ENCODE measurements at regions of chr4 and their contacts with region 1.

Region 1: GRCh38 chr4:113524096-113524495 is 237.4 kb downstream of the CAMK2D start:
- DNase-seq: no peak
- H3K4me3 Mint-ChIP-seq: no peak overlapping the region
- H3K27ac Mint-ChIP-seq: peak overlapping the region; percentile 43
- H3K4me1 Mint-ChIP-seq: peaks cover 22% of the 10 kb centered on the region
- H3K27me3 Mint-ChIP-seq: no peaks in the 10 kb centered on the region

Region 2: DNA sequence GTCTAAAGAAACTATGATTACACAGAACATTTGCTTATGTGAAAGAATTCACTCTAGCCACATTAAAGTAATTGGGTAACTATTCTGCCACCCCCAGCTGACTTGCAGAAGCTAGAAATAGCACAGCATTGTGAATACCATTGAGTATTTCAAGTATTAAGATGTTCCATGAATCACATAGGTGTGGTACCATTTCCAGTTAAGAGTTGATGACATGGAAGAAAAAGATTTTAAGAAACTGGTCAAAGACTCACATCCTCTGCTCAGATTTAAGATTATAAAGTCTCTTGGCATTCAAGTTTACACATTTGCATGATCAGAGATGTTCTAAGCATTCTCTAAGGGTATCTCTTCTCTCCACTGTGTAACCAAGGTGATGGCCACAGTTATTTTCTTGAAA is 50.1 kb before region 1 on chr4:
- intact Hi-C with region 1: loop called (anchors 2 kb)
- DNase-seq: no peak
- H3K4me3 Mint-ChIP-seq: no peak overlapping the region
- H3K27ac Mint-ChIP-seq: peak overlapping the region; percentile 7
- H3K4me1 Mint-ChIP-seq: peaks cover 28% of the 10 kb centered on the region
- H3K27me3 Mint-ChIP-seq: no peaks in the 10 kb centered on the region